ENCODE measurements at regions of chr1 and their contacts with region 1.

Region 1: GRCh38 chr1:88701275-88701674 is 17.2 kb downstream of the PKN2 start:
- DNase-seq: no peak
- H3K4me3 Mint-ChIP-seq: no peak overlapping the region
- H3K27ac Mint-ChIP-seq: no peak overlapping the region
- H3K4me1 Mint-ChIP-seq: peaks cover 25% of the 10 kb centered on the region
- H3K27me3 Mint-ChIP-seq: no peaks in the 10 kb centered on the region

Region 2: DNA sequence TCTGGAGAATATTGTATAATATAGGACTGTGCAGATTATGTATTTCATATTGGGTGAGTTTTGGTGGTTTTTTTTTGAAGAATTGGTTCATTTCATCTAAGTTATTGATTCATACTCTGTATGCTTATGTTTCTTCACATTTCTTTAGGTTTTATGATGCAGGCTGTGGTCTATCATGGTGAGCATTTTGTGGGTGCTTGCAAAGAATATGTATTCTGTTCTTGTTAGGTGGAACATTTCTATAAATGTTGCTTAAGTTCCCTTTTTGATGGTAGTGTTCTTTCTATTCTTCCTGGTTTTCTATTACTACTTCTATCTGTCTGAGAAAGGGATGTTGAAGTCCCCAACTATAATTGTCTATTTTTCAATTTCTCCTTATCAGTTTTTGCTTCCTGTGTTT is 25.4 kb after region 1 on chr1:
- CTCF ChIA-PET with region 1: no interaction called
- intact Hi-C with region 1: loop called (anchors 2 kb)
- DNase-seq: no peak
- H3K4me3 Mint-ChIP-seq: no peak overlapping the region
- H3K27ac Mint-ChIP-seq: no peak overlapping the region
- H3K4me1 Mint-ChIP-seq: peaks cover 53% of the 10 kb centered on the region
- H3K27me3 Mint-ChIP-seq: no peaks in the 10 kb centered on the region

Measured in activated naive CD4-positive, alpha-beta T cell treated with anti-CD3 and anti-CD28 coated beads for 36 hours (primary cell).